ENCODE measurements at regions of chr2 and their contacts with region 1.

Region 1: GRCh38 chr2:112259509-112260294 is 4.9 kb upstream of the ZC3H8 start:
- DNase-seq: peak; percentile 70
- CTCF ChIP-seq: peak; percentile 97

Region 2: GRCh38 chr2:112121682-112122254 is 137.9 kb before region 1 on chr2:
- CTCF ChIA-PET with region 1: interaction called, 11 read pairs
- POLR2A ChIA-PET with region 1: no interaction called
- DNase-seq: no peak
- CTCF ChIP-seq: peak; percentile 49

Region 3: DNA sequence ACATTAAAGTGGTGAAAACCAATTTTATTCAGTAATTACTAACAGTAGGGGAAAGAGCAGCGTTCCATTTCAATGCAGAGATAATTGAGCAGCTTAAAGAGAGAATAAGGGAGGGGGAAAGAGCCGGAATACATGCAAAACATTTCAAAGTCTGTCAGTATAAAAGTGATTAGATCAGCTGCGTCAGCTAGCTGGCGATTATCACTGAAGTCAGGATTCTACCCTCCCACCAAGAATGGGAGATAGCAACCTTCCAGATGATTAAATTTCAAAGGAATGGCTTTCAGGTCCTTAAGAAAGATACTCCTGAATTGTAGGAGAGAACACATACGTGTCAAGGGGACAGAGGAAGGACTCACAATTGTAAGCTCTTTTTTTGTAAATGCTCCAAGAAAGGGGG is 13.0 kb after region 1 on chr2:
- CTCF ChIA-PET with region 1: interaction called, 32 read pairs
- POLR2A ChIA-PET with region 1: no interaction called
- DNase-seq: no peak
- CTCF ChIP-seq: no peak

Region 4: GRCh38 chr2:112304298-112304941 is 44.7 kb after region 1 on chr2:
- CTCF ChIA-PET with region 1: no interaction called
- POLR2A ChIA-PET with region 1: no interaction called
- DNase-seq: peak; percentile 14
- CTCF ChIP-seq: no peak